PC-3 (cell line): ENCODE measurements at regions of chr2 and their contacts with region 1.

Region 1: DNA sequence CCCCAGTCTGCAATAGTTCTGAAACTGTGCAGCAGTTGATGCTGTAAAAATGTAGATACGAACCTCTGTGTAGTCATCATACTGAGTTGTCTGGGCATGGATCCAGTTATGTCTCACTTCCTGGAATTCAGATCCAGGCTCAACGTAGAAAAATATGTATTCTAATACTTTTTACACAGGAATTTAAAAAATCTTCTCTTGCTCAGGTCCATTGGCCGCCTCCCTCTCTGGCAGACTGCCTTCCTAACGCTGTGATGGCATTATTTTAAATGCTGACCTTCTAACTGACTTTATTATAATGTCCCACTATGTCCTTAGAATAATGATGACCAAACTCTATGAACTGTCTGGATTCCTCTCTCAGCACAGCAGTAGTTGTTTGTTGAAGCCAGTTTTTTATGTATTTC is 119.6 kb downstream of the FEZ2 start:
- DNase-seq: peak; percentile 96
- ATAC-seq: peak; percentile 83
- H3K4me3 ChIP-seq: no peak overlapping the region
- H3K27ac ChIP-seq: peak overlapping the region; percentile 68
- H3K4me1 ChIP-seq: peaks cover 46% of the 10 kb centered on the region
- H3K27me3 ChIP-seq: no peaks in the 10 kb centered on the region
- CTCF ChIP-seq: no peak

Region 2: DNA sequence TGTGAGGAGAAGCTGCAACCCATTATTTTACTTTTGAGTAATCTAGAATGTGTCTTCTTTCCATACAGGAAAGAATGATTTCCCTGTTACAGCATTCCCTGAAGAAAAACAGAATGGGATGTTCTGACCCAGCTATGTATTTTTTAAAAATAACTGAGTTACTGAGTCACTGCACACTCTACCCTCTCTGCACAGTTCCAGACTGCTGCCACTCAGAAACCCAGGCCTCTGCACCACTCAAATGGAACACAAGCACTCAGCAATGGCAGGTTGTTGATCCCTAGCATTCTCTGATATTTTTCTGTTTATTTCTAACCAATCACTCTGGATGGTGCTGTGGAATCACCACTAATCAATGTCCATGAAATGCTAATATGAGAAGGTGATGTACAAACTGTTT is 1579.3 kb before region 1 on chr2:
- CTCF ChIA-PET with region 1: no interaction called
- POLR2A ChIA-PET with region 1: no interaction called
- intact Hi-C with region 1: no loop called
- DNase-seq: no peak
- ATAC-seq: no peak
- H3K4me3 ChIP-seq: no peak overlapping the region
- H3K27ac ChIP-seq: no peak overlapping the region
- H3K4me1 ChIP-seq: no peaks in the 10 kb centered on the region
- H3K27me3 ChIP-seq: no peaks in the 10 kb centered on the region
- CTCF ChIP-seq: no peak

Region 3: GRCh38 chr2:36403675-36404230 is 74.6 kb before region 1 on chr2:
- CTCF ChIA-PET with region 1: no interaction called
- POLR2A ChIA-PET with region 1: no interaction called
- intact Hi-C with region 1: no loop called
- DNase-seq: peak; percentile 99
- ATAC-seq: peak; percentile 90
- H3K4me3 ChIP-seq: peak overlapping the region; percentile 54
- H3K27ac ChIP-seq: peak overlapping the region; percentile 97
- H3K4me1 ChIP-seq: peaks cover 38% of the 10 kb centered on the region
- H3K27me3 ChIP-seq: no peaks in the 10 kb centered on the region
- CTCF ChIP-seq: no peak

Region 4: GRCh38 chr2:36461039-36461681 is 17.2 kb before region 1 on chr2:
- CTCF ChIA-PET with region 1: no interaction called
- POLR2A ChIA-PET with region 1: interaction called, 6 read pairs
- intact Hi-C with region 1: loop called (anchors 1 kb)
- DNase-seq: peak; percentile 92
- ATAC-seq: peak; percentile 91
- H3K4me3 ChIP-seq: peak overlapping the region; percentile 22; the same call in 1 of the 2 replicates
- H3K27ac ChIP-seq: peak overlapping the region; percentile 81
- H3K4me1 ChIP-seq: peaks cover 36% of the 10 kb centered on the region
- H3K27me3 ChIP-seq: no peaks in the 10 kb centered on the region
- CTCF ChIP-seq: no peak